Activated CD8-positive, alpha-beta T cell treated with anti-CD3 and anti-CD28 coated beads, Interleukin-2, amount 10 ng/mL, durations not matched to agents 7 days and 5 days (primary cell): ENCODE measurements at regions of chr12 and their contacts with region 1.

Region 1: GRCh38 chr12:106357549-106358395 is at the start of gene POLR3B:
- DNase-seq: peak; percentile 97
- ATAC-seq: peak; percentile 93
- H3K4me3 Mint-ChIP-seq: peak within 1 kb of the TSS; percentile 89
- H3K27ac Mint-ChIP-seq: peak within 1 kb of the TSS; percentile 91
- H3K4me1 Mint-ChIP-seq: peaks cover 16% of the 10 kb centered on the region
- H3K27me3 Mint-ChIP-seq: no peaks in the 10 kb centered on the region
- total RNA-seq, gene POLR3B: 5.4 to 6.6 TPM

Region 2: GRCh38 chr12:106223485-106224354 is 134.1 kb before region 1 on chr12:
- CTCF ChIA-PET with region 1: interaction called, 25 read pairs
- POLR2A ChIA-PET with region 1: interaction called, 11 read pairs
- DNase-seq: peak; percentile 78
- ATAC-seq: peak; percentile 86
- H3K4me3 Mint-ChIP-seq: no peak overlapping the region
- H3K27ac Mint-ChIP-seq: no peak overlapping the region
- H3K4me1 Mint-ChIP-seq: peaks cover 25% of the 10 kb centered on the region
- H3K27me3 Mint-ChIP-seq: peaks cover 5% of the 10 kb centered on the region

Region 3: GRCh38 chr12:106345739-106346138 is 12.0 kb before region 1 on chr12:
- CTCF ChIA-PET with region 1: interaction called, 16 read pairs
- POLR2A ChIA-PET with region 1: no interaction called
- DNase-seq: no peak
- ATAC-seq: peak; percentile 39
- H3K4me3 Mint-ChIP-seq: no peak overlapping the region
- H3K27ac Mint-ChIP-seq: no peak overlapping the region
- H3K4me1 Mint-ChIP-seq: no peaks in the 10 kb centered on the region
- H3K27me3 Mint-ChIP-seq: peaks cover 2% of the 10 kb centered on the region

Region 4: GRCh38 chr12:106378788-106379187 is 21.0 kb after region 1 on chr12:
- CTCF ChIA-PET with region 1: interaction called, 36 read pairs
- POLR2A ChIA-PET with region 1: interaction called, 4 read pairs
- DNase-seq: no peak
- ATAC-seq: peak; percentile 49
- H3K4me3 Mint-ChIP-seq: no peak overlapping the region
- H3K27ac Mint-ChIP-seq: peak overlapping the region; percentile 40
- H3K4me1 Mint-ChIP-seq: peaks cover 22% of the 10 kb centered on the region
- H3K27me3 Mint-ChIP-seq: no peaks in the 10 kb centered on the region

Region 5: DNA sequence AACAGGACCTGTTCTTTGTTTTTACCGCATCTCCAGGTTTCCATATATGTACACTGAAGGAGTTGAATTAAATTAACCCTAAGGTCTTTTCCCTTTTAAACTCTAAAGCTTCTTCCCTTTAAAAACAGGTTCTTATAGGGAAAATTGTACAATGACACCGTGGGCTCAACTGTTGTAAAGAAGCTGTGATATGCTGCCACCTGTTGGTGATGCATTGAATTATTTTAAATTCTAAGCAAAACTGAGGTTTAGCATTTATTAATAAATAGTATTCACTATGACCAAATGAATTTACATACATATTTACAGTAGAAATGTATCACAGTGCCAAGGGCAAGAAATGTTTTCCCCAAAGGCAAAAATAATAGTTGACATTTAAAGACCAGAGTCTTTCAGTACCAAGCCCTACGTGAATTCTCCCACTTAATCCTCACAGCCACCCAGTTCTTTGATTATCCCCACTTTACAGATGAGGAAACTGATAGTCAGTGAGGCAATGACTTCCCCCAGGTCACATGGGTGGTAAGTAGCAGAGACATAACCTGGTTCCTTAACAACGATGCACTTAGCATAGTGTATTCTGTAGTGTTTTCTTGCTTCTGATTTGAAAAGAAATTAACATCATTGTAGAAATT is 562.3 kb after region 1 on chr12:
- CTCF ChIA-PET with region 1: interaction called, 46 read pairs
- POLR2A ChIA-PET with region 1: no interaction called
- DNase-seq: peak; percentile 39
- ATAC-seq: no peak
- H3K4me3 Mint-ChIP-seq: no peak overlapping the region
- H3K27ac Mint-ChIP-seq: no peak overlapping the region
- H3K4me1 Mint-ChIP-seq: peaks cover 9% of the 10 kb centered on the region
- H3K27me3 Mint-ChIP-seq: peaks cover 20% of the 10 kb centered on the region